Activated CD4-positive, alpha-beta T cell treated with anti-CD3 and anti-CD28 coated beads, Interleukin-2, amount 10 ng/mL, durations not matched to agents 24 days and 14 days (primary cell): ENCODE measurements at regions of chr12 and their contacts with region 1.

Region 1: GRCh38 chr12:9869307-9870161 is at the start of gene CLEC2B:
- DNase-seq: peak; percentile 80
- H3K4me3 Mint-ChIP-seq: peak within 1 kb of the TSS; percentile 92
- H3K27ac Mint-ChIP-seq: peak within 1 kb of the TSS; percentile 93
- H3K4me1 Mint-ChIP-seq: peaks cover 28% of the 10 kb centered on the region
- H3K27me3 Mint-ChIP-seq: no peaks in the 10 kb centered on the region
- total RNA-seq, gene CLEC2B: 13.0 and 13.1 TPM in 2 replicates

Region 2: GRCh38 chr12:9647825-9648700 is 221.5 kb before region 1 on chr12:
- intact Hi-C with region 1: loop called (anchors 1 kb)
- DNase-seq: peak; percentile 98
- H3K4me3 Mint-ChIP-seq: peak overlapping the region; percentile 95
- H3K27ac Mint-ChIP-seq: peak overlapping the region; percentile 97
- H3K4me1 Mint-ChIP-seq: peaks cover 57% of the 10 kb centered on the region
- H3K27me3 Mint-ChIP-seq: peaks cover 3% of the 10 kb centered on the region

Region 3: GRCh38 chr12:9760699-9761418 is 108.7 kb before region 1 on chr12 and contains the start of gene CD69:
- intact Hi-C with region 1: loop called (anchors 1 kb)
- DNase-seq: peak; percentile 96
- H3K4me3 Mint-ChIP-seq: peak within 1 kb of the TSS; percentile 94
- H3K27ac Mint-ChIP-seq: peak within 1 kb of the TSS; percentile 98
- H3K4me1 Mint-ChIP-seq: peaks cover 48% of the 10 kb centered on the region
- H3K27me3 Mint-ChIP-seq: peaks cover 5% of the 10 kb centered on the region
- total RNA-seq, gene CD69: 106 and 111 TPM in 2 replicates

Region 4: DNA sequence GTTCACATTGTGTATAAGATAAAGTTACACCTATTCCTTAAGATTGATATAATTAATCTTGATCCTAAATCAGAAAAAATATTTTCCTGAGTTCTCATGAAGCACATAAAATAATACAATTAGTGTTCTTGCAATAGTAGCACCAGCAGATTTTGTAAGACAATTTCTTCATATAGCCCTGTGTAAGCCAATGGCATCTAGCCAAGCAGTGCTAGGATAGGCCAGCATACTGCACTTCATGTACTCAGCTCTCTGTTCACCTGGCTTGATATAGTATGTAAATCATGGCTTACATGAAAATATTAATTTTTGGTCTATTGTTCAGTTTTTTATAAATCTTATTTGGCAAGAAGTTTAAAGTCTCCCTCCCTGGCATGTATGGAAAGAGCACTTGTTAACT is 13.6 kb after region 1 on chr12:
- intact Hi-C with region 1: no loop called
- DNase-seq: no peak
- H3K4me3 Mint-ChIP-seq: no peak overlapping the region
- H3K27ac Mint-ChIP-seq: no peak overlapping the region
- H3K4me1 Mint-ChIP-seq: peaks cover 4% of the 10 kb centered on the region
- H3K27me3 Mint-ChIP-seq: peaks cover 5% of the 10 kb centered on the region

Region 5: DNA sequence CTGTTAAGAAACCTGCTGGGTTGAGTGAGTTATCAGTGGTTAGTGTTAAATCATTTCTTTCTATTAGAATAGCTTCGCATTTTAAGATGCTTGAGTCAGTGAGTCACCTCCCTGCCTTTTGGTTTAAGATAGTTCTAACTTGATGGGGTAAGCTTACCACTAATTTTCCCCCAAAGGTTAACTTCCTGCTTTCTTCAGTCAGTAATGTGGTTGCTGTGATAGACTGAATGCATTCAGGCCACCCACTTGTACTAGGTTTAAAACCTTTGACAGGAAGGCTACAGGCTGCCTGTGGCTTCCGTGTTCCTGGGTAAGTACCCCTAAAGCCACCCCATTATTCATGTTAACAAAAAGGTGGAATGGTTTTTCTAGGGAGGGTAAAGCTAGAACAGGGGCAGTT is 37.3 kb after region 1 on chr12:
- intact Hi-C with region 1: loop called (anchors 5 kb)
- DNase-seq: peak; percentile 80
- H3K4me3 Mint-ChIP-seq: peak overlapping the region; percentile 47
- H3K27ac Mint-ChIP-seq: peak overlapping the region; percentile 12
- H3K4me1 Mint-ChIP-seq: peaks cover 19% of the 10 kb centered on the region
- H3K27me3 Mint-ChIP-seq: no peaks in the 10 kb centered on the region

Region 6: DNA sequence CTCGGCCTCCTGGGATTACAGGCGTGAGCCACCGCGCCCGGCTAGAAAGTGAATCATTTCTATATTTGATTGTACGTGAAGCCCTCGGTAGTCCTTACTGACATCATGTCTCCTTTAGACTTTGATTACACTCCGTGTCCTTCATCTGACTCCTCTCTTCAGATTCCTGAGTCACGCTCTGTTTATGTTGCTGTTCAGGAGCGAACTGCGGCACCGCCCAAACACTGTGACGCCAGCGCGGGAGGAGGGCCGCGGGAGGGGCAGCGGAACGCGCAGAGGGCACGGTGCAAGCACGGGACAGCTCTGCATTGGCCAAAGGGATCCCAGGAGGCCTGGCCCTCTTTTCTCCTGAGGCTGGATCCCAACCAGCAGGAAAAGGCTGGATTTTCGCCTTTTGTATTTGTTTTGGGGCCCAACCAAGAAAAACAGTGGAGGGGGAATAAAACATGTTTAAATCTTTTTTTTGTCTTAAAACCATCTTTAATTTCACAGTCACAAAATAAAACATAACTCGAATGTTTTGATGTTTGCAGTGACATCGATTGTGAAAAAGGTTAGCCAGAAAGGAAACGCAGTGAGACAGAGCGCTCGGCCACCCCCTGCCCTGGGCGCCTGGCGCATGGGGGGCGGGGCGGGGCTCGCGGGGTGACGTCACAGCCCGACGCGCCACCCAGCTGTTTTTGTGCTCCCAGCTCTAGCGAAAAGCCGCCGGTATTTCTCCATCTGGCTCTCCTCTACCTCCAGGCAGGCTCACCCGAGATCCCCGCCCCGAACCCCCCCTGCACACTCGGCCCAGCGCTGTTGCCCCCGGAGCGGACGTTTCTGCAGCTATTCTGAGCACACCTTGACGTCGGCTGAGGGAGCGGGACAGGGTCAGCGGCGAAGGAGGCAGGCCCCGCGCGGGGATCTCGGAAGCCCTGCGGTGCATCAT is 342.9 kb after region 1 on chr12 and contains the start of gene GABARAPL1:
- intact Hi-C with region 1: loop called (anchors 2 kb)
- DNase-seq: peak; percentile 95
- H3K4me3 Mint-ChIP-seq: peak within 1 kb of the TSS; percentile 94
- H3K27ac Mint-ChIP-seq: peak within 1 kb of the TSS; percentile 93
- H3K4me1 Mint-ChIP-seq: peaks cover 26% of the 10 kb centered on the region
- H3K27me3 Mint-ChIP-seq: peaks cover 30% of the 10 kb centered on the region
- total RNA-seq, gene GABARAPL1: 1.5 and 2.6 TPM in 2 replicates